ENCODE measurements at regions of chr9 and their contacts with region 1.

Region 1: DNA sequence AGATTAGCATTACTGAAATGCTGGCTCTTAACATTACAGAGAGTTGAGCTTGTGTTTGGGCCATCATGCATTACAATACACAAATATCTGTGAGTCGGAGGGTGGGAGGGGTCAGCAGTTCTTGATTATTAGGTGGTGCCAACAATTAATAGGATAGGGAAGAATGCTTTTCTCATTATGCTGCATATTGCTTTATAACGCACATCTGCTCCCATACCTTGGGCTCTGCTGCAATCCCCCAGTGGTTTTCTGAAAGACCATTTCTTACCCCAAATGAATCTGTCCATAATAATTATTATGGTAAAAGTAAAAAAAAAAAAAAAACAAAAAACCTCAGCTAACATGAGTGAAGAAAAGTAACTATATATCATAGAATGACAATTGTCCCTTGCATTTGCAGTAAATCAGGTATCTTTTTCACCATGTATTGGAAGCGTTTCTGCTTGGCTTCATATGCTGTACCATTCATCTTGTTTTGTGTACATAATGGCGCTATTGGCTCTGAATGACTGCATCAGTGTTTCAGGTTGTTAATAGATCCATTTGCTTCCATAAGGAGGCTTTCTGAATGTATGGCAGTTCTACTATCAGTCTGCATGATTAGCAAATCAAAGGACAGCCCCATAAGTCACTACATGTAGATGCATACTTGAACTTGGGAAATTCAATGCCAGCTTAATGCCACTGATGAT is 75.9 kb downstream of the CAVIN4 start:
- DNase-seq: no peak
- ATAC-seq: no peak
- H3K4me3 ChIP-seq: no peak overlapping the region
- H3K27ac ChIP-seq: no peak overlapping the region
- H3K4me1 ChIP-seq: no peaks in the 10 kb centered on the region
- H3K27me3 ChIP-seq: no peaks in the 10 kb centered on the region

Region 2: GRCh38 chr9:100575765-100576386 is 77.9 kb before region 1 on chr9:
- intact Hi-C with region 1: no loop called
- DNase-seq: no peak
- ATAC-seq: no peak
- H3K4me3 ChIP-seq: no peak overlapping the region
- H3K27ac ChIP-seq: no peak overlapping the region
- H3K4me1 ChIP-seq: peaks cover 0 to 2% of the 10 kb centered on the region in 2 donors
- H3K27me3 ChIP-seq: no peaks in the 10 kb centered on the region

Region 3: GRCh38 chr9:100670719-100671118 is 16.9 kb after region 1 on chr9:
- intact Hi-C with region 1: loop called in 1 of 2 experiments (anchors 1 kb)
- DNase-seq: no peak
- ATAC-seq: no peak
- H3K4me3 ChIP-seq: no peak overlapping the region
- H3K27ac ChIP-seq: no peak overlapping the region
- H3K4me1 ChIP-seq: no peaks in the 10 kb centered on the region
- H3K27me3 ChIP-seq: no peaks in the 10 kb centered on the region

Measured in aorta (tissue), 5 donors.